CD4-positive, alpha-beta memory T cell (primary cell): ENCODE measurements at regions of chr10 and their contacts with region 1.

Region 1: GRCh38 chr10:27504007-27504807 is at the start of gene RAB18:
- DNase-seq: peak; percentile 97 to 99 (median 99)
- H3K4me3 ChIP-seq: peak within 1 kb of the TSS; percentile 59 to 74
- H3K4me3 Mint-ChIP-seq: peak within 1 kb of the TSS; percentile 96 to 100 (median 99)
- H3K27ac ChIP-seq: peak within 1 kb of the TSS; percentile 90
- H3K27ac Mint-ChIP-seq: peak within 1 kb of the TSS; percentile 96 to 100 (median 99)
- H3K4me1 ChIP-seq: peaks cover 42% of the 10 kb centered on the region
- H3K4me1 Mint-ChIP-seq: peaks cover 44 to 56% (median 51%) of the 10 kb centered on the region in 4 donors
- H3K27me3 ChIP-seq: no peaks in the 10 kb centered on the region
- H3K27me3 Mint-ChIP-seq: no peaks in the 10 kb centered on the region
- total RNA-seq, gene RAB18: 83.3 to 88.5 TPM

Region 2: DNA sequence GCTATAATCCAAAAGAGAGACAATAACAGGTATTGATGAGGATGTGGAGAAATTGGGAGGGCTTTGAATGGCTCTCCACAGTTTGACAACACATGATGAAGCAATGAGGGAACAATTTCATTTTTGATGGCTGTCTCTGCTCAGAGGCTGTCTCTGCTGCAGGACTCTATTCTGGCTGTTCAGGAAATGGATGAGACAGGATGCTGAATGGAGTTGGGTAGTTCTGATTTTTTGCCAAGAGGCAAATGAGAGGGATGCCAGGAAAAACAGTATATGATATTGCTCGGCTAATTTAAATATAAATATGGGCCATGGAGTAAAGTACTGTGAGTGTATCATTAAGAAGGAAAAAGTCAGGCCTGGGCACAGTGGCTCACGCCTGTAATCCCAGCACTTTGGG is 1049.3 kb before region 1 on chr10:
- CTCF ChIA-PET with region 1: no interaction called
- POLR2A ChIA-PET with region 1: no interaction called
- intact Hi-C with region 1: loop called (anchors 5 kb)
- DNase-seq: no peak
- H3K4me3 ChIP-seq: no peak overlapping the region
- H3K4me3 Mint-ChIP-seq: peak overlapping the region in 6 of 8 donors; percentile 14 to 67 (median 57)
- H3K27ac ChIP-seq: no peak overlapping the region
- H3K27ac Mint-ChIP-seq: peak overlapping the region; percentile 29 to 86 (median 72)
- H3K4me1 ChIP-seq: peaks cover 77% of the 10 kb centered on the region
- H3K4me1 Mint-ChIP-seq: peaks cover 65 to 84% (median 78%) of the 10 kb centered on the region in 4 donors
- H3K27me3 ChIP-seq: no peaks in the 10 kb centered on the region
- H3K27me3 Mint-ChIP-seq: no peaks in the 10 kb centered on the region

Region 3: GRCh38 chr10:27099916-27100812 is 404.0 kb before region 1 on chr10 and contains the start of gene ANKRD26:
- CTCF ChIA-PET with region 1: no interaction called
- POLR2A ChIA-PET with region 1: no interaction called
- intact Hi-C with region 1: loop called (anchors 2 kb)
- DNase-seq: peak; percentile 95 to 96 (median 95)
- H3K4me3 ChIP-seq: peak within 1 kb of the TSS; percentile 58 to 67
- H3K4me3 Mint-ChIP-seq: peak within 1 kb of the TSS; percentile 92 to 99 (median 96)
- H3K27ac ChIP-seq: peak within 1 kb of the TSS; percentile 76
- H3K27ac Mint-ChIP-seq: peak within 1 kb of the TSS; percentile 94 to 99 (median 98)
- H3K4me1 ChIP-seq: peaks cover 33% of the 10 kb centered on the region
- H3K4me1 Mint-ChIP-seq: peaks cover 21 to 49% (median 37%) of the 10 kb centered on the region in 4 donors
- H3K27me3 ChIP-seq: no peaks in the 10 kb centered on the region
- H3K27me3 Mint-ChIP-seq: no peaks in the 10 kb centered on the region
- total RNA-seq, gene ANKRD26: 10.7 to 11.6 TPM

Region 4: DNA sequence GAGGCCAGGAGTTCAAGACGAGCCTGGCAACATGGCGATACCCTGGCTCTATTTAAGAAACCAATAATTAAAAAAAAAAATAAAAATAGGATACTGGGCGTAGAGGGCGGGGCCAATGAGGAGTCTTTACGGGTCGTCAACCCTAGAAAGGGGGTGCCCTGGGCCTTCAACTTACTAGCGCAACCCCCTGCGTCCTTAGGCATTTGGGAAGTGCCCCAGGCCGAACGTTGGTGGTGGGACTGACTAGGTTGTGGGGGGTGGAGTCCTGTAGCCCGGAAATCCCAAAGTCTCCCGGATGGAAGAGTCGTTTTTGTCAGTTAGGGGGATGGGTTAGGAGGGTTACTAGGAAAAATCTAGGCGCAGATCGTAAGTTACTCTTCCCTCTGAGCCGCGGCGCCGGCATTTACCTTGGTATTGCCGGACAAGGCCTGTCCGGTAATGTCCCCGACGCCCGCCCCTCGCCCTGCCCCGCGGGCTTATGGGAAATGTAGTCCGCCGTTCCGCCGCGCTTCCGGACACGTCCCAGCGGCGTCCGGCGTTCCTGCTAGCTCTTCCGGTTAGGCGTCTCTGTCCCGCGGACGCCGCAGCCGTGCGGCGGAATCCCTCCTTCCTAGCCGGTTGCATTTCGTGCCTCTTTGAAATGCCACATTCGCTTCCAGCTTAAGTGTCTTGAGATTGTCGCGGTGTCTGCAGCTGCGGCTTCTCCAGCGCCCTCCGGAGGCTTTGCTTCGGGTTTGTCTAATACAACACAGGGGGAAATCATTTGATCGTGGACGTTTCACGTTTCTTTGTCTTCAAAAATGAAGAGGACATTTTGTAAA is 262.3 kb before region 1 on chr10:
- CTCF ChIA-PET with region 1: interaction called, 5 read pairs
- POLR2A ChIA-PET with region 1: interaction called, 37 read pairs
- intact Hi-C with region 1: loop called (anchors 2 kb)
- DNase-seq: peak; percentile 85 to 88 (median 87)
- H3K4me3 ChIP-seq: peak overlapping the region; percentile 66 to 94
- H3K4me3 Mint-ChIP-seq: peak overlapping the region; percentile 95 to 99 (median 99)
- H3K27ac ChIP-seq: peak overlapping the region; percentile 89
- H3K27ac Mint-ChIP-seq: peak overlapping the region; percentile 98 to 100 (median 99)
- H3K4me1 ChIP-seq: peaks cover 36% of the 10 kb centered on the region
- H3K4me1 Mint-ChIP-seq: peaks cover 20 to 54% (median 31%) of the 10 kb centered on the region in 4 donors
- H3K27me3 ChIP-seq: no peaks in the 10 kb centered on the region
- H3K27me3 Mint-ChIP-seq: peaks cover 0 to 3% of the 10 kb centered on the region in 2 donors

Region 5: DNA sequence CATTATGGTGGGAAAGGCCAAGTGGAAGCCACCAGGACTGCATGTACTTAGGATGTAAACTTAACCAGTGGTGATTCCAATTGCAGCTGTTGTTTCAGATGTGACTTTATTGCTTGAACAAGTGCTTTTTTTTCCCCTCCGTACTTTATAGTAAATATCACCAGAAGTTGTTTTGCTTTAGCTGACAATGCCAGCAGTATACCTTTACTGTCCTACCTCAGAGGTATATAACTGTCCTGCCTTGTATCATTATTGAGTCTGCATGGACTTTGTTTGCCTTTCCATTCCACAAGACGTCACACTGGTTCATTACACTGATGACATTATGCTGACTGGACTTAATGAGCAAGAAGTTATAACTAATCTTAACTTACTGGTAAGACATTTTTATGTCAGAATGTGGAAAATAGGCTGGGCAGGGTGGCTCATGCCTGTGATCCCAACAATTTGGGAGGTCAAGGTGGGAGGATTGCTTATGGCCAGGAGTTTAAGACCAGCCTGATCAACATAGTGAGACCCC is 77.2 kb before region 1 on chr10:
- CTCF ChIA-PET with region 1: no interaction called
- POLR2A ChIA-PET with region 1: no interaction called
- intact Hi-C with region 1: no loop called
- DNase-seq: no peak
- H3K4me3 ChIP-seq: no peak overlapping the region
- H3K4me3 Mint-ChIP-seq: no peak overlapping the region
- H3K27ac ChIP-seq: no peak overlapping the region
- H3K27ac Mint-ChIP-seq: no peak overlapping the region
- H3K4me1 ChIP-seq: no peaks in the 10 kb centered on the region
- H3K4me1 Mint-ChIP-seq: no peaks in the 10 kb centered on the region
- H3K27me3 ChIP-seq: no peaks in the 10 kb centered on the region
- H3K27me3 Mint-ChIP-seq: peaks cover 7 to 19% of the 10 kb centered on the region in 2 donors

Region 6: GRCh38 chr10:27464993-27465392 is 39.2 kb before region 1 on chr10:
- CTCF ChIA-PET with region 1: interaction called, 6 read pairs
- POLR2A ChIA-PET with region 1: interaction called, 28 read pairs
- intact Hi-C with region 1: loop called (anchors 1 kb)
- DNase-seq: peak; percentile 39 to 52 (median 50)
- H3K4me3 ChIP-seq: no peak overlapping the region
- H3K4me3 Mint-ChIP-seq: peak overlapping the region in 7 of 8 donors; percentile 61 to 76 (median 65)
- H3K27ac ChIP-seq: peak overlapping the region; percentile 2
- H3K27ac Mint-ChIP-seq: peak overlapping the region; percentile 79 to 94 (median 92)
- H3K4me1 ChIP-seq: peaks cover 26% of the 10 kb centered on the region
- H3K4me1 Mint-ChIP-seq: peaks cover 30 to 42% (median 36%) of the 10 kb centered on the region in 4 donors
- H3K27me3 ChIP-seq: no peaks in the 10 kb centered on the region
- H3K27me3 Mint-ChIP-seq: no peaks in the 10 kb centered on the region

Region 7: GRCh38 chr10:28334296-28334695 is 830.1 kb after region 1 on chr10:
- CTCF ChIA-PET with region 1: no interaction called
- POLR2A ChIA-PET with region 1: interaction called, 18 read pairs
- intact Hi-C with region 1: loop called (anchors 5 kb)
- DNase-seq: peak; percentile 87 to 95 (median 93)
- H3K4me3 ChIP-seq: peak overlapping the region; percentile 36 to 94
- H3K4me3 Mint-ChIP-seq: peak overlapping the region; percentile 91 to 98 (median 96)
- H3K27ac ChIP-seq: peak overlapping the region; percentile 97
- H3K27ac Mint-ChIP-seq: peak overlapping the region; percentile 99 to 100 (median 100)
- H3K4me1 ChIP-seq: peaks cover 62% of the 10 kb centered on the region
- H3K4me1 Mint-ChIP-seq: peaks cover 32 to 70% (median 49%) of the 10 kb centered on the region in 4 donors
- H3K27me3 ChIP-seq: no peaks in the 10 kb centered on the region
- H3K27me3 Mint-ChIP-seq: no peaks in the 10 kb centered on the region